Dendritic cell treated with granulocyte-macrophage colony-stimulating factor and Interleukin-4, amounts not matched to agents 40 ng/mL and 50 ng/mL, for 4 days (primary cell): ENCODE measurements at regions of chr6 and their contacts with region 1.

Region 1: DNA sequence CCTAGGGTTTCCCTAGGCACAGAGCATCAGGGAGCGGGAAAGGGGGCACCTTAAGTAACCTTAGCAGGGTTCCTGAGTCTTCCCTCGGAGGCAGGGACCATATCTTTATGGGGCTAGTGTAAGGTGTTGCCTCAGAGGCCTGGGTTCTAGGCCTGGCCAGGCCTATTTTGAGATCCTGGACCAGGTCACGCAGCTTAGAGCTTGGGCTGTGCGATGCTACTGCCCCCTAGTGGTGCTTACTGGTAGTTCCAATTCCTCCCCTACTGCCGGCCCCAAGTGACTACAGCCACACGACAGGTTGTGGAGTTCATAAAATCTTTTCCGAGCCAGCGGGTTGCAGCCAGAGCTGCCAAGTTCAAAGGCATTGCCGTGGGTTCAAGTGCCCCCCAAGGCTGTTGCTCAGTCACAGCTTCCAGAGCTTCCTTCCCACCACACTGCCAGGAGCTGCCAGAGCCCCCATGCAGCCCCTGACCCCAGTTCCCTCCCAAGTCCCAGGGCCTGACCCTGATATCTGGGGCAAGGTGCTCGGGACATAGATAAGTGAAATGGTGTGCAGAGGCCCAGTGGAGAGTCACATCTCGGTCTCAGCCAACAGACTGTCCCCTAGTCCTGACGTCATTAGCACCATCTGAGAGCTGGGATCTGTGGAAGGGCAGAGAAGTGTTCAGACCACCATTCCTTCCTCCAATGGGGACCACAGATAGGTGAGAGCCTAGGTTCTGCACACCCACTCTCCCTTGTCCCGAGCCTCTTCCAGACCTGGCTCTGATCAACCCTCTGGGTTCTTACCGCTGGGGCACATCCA is 3.3 kb downstream of the LRRC73 start:
- H3K4me3 Mint-ChIP-seq: no peak overlapping the region
- H3K27ac Mint-ChIP-seq: no peak overlapping the region
- H3K4me1 Mint-ChIP-seq: peaks cover 38% of the 10 kb centered on the region
- H3K27me3 Mint-ChIP-seq: peaks cover 29% of the 10 kb centered on the region

Region 2: GRCh38 chr6:43454696-43455530 is 52.0 kb before region 1 on chr6:
- intact Hi-C with region 1: loop called (anchors 1 kb)
- H3K4me3 Mint-ChIP-seq: peak overlapping the region; percentile 83
- H3K27ac Mint-ChIP-seq: no peak overlapping the region
- H3K4me1 Mint-ChIP-seq: peaks cover 18% of the 10 kb centered on the region
- H3K27me3 Mint-ChIP-seq: peaks cover 37% of the 10 kb centered on the region

Region 3: GRCh38 chr6:43491750-43492661 is 14.9 kb before region 1 on chr6:
- intact Hi-C with region 1: no loop called
- H3K4me3 Mint-ChIP-seq: no peak overlapping the region
- H3K27ac Mint-ChIP-seq: no peak overlapping the region
- H3K4me1 Mint-ChIP-seq: peaks cover 42% of the 10 kb centered on the region
- H3K27me3 Mint-ChIP-seq: no peaks in the 10 kb centered on the region

Region 4: DNA sequence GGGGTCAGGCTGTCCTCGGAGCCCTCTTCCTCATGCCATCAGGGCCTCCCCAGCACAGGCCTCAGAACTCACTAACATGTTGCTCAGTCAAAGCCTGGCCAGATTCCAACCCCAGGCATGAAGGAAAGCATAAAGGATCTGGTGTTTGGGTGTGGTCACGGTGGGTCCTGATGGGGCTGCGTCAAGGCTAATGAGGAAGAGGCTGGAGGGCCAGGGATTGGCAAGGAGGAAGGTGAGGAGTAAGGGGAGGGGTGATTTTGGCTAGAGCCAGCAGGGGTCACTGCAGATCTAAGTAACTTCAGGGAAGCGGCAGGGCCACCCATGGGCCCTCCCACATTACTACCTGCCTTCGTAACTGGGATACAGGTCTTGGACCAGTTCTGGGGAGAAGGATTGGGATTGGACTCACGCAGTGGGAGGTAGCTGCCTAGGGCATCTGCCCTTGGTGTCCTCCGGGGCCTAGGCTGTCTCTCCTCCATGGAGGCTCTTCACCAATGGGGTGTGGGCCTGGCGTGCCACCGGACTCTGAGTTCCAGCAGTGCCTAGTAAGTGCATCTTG is 216.9 kb after region 1 on chr6:
- intact Hi-C with region 1: no loop called
- H3K4me3 Mint-ChIP-seq: no peak overlapping the region
- H3K27ac Mint-ChIP-seq: peak overlapping the region; percentile 30
- H3K4me1 Mint-ChIP-seq: peaks cover 49% of the 10 kb centered on the region
- H3K27me3 Mint-ChIP-seq: peaks cover 86% of the 10 kb centered on the region